MCF 10A (cell line): ENCODE measurements at regions of chr1 and their contacts with region 1.

Region 1: GRCh38 chr1:46223472-46223943 is 20.4 kb downstream of the LURAP1 start:
- DNase-seq: peak; percentile 91
- H3K4me3 Mint-ChIP-seq: no peak overlapping the region
- H3K27ac Mint-ChIP-seq: peak overlapping the region; percentile 28
- H3K4me1 Mint-ChIP-seq: peaks cover 13% of the 10 kb centered on the region
- H3K27me3 Mint-ChIP-seq: no peaks in the 10 kb centered on the region
- CTCF ChIP-seq: peak; percentile 93

Region 2: DNA sequence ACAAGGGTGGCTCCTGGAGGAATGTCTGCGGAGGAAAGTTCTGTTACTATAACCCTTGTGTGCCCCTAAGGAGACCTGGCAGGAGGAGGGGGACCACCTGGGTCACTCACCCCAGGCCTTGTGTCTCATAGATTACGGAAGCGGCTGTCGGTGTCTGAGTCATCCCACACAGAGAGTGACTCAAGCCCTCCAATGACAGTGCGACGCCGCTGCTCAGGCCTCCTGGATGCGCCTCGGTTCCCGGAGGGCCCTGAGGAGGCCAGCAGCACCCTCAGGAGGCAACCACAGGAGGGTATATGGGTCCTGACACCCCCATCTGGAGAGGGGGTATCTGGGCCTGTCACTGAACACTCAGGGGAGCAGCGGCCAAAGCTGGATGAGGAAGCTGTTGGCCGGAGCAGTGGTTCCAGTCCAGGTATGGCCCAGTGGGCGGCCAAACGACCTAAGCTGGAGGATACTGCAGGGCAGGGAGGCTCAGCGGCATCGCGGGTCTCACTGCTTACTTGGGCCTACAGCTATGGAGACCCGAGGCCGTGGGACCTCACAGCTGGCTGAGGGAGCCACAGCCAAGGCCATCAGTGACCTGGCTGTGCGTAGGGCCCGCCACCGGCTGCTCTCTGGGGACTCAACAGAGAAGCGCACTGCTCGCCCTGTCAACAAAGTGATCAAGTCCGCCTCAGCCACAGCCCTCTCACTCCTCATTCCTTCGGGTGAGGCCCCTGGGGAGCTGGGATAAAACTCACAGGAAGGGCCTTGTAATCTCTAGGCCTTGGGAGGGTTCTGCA is 192.4 kb before region 1 on chr1:
- CTCF ChIA-PET with region 1: interaction called, 48 read pairs
- POLR2A ChIA-PET with region 1: no interaction called
- intact Hi-C with region 1: no loop called
- DNase-seq: no peak
- H3K4me3 Mint-ChIP-seq: no peak overlapping the region
- H3K27ac Mint-ChIP-seq: no peak overlapping the region
- H3K4me1 Mint-ChIP-seq: no peaks in the 10 kb centered on the region
- H3K27me3 Mint-ChIP-seq: no peaks in the 10 kb centered on the region
- CTCF ChIP-seq: no peak

Region 3: DNA sequence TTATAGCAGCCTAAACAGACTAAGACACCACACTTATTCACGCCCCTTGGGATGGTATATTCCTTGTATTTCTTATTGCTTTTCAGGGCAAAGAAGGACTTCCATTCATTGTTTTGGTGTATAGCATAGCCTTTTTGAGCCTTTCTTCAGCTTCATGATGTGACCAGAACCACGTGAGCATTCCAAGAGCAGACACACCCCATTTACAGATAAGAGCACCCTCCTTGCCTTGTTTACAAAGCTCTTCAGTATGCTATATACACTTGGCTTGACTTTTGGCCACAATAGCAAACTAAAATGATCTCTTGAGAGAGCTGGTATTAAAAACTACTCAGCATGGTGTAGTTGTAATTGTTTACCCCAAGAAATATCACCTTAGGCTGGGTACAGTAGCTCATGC is 169.8 kb before region 1 on chr1:
- CTCF ChIA-PET with region 1: interaction called, 10 read pairs
- POLR2A ChIA-PET with region 1: no interaction called
- intact Hi-C with region 1: no loop called
- DNase-seq: no peak
- H3K4me3 Mint-ChIP-seq: no peak overlapping the region
- H3K27ac Mint-ChIP-seq: no peak overlapping the region
- H3K4me1 Mint-ChIP-seq: peaks cover 5% of the 10 kb centered on the region
- H3K27me3 Mint-ChIP-seq: no peaks in the 10 kb centered on the region
- CTCF ChIP-seq: no peak

Region 4: DNA sequence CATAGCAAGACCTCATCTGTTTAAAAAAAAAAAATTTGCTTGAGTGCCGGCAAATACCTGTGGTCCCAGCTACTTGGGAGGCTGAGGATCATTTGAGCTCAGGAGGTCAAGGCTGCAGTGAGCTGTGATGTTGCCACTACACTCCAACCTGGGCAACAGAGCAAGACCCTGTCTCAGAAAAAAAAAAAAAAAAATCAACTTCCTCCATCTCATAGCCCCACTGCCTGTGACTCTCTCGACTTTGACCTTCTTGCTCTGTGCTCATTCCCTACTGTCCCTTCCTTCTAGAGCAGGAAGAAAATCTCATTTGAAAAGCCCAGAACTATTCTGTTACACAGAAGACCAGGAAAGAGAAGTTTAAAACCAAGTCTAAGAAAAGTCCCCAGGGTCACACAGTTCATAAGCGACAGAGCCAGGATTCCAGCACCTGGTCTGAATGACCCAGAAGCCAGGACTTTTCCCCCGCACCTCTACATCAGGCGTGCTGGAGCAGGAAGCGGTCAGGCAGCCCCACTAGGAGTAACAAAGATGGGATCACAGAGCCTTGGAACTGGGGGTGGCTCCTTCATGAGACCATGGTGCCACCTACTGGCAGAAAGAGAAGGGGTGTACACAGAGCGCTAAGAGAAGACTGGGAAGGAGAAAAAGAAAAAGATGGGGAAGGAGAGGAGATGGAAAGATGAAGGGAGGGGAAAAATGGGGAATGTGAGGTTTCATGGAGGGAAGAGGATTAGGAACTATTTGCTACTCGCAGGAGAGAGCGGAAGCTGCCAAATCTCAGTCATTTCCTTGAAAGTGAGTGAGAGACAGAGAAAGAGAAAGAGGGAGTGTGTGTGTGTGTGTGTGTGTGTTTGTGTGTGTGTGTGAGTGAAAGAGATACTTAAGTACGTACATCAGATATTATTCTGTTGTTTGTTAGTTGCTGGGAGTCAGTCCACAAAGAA is 44.1 kb before region 1 on chr1:
- CTCF ChIA-PET with region 1: interaction called, 266 read pairs
- POLR2A ChIA-PET with region 1: interaction called, 66 read pairs
- intact Hi-C with region 1: loop called (anchors 1 kb)
- DNase-seq: peak; percentile 94
- H3K4me3 Mint-ChIP-seq: no peak overlapping the region
- H3K27ac Mint-ChIP-seq: no peak overlapping the region
- H3K4me1 Mint-ChIP-seq: peaks cover 7% of the 10 kb centered on the region
- H3K27me3 Mint-ChIP-seq: no peaks in the 10 kb centered on the region
- CTCF ChIP-seq: peak; percentile 89

Region 5: GRCh38 chr1:46197964-46198811 is 25.3 kb before region 1 on chr1 and contains the start of gene POMGNT1:
- CTCF ChIA-PET with region 1: interaction called, 26 read pairs
- POLR2A ChIA-PET with region 1: interaction called, 29 read pairs
- intact Hi-C with region 1: loop called (anchors 2 kb)
- DNase-seq: peak; percentile 73
- H3K4me3 Mint-ChIP-seq: peak within 1 kb of the TSS; percentile 76
- H3K27ac Mint-ChIP-seq: peak within 1 kb of the TSS; percentile 80
- H3K4me1 Mint-ChIP-seq: peaks cover 25% of the 10 kb centered on the region
- H3K27me3 Mint-ChIP-seq: no peaks in the 10 kb centered on the region
- CTCF ChIP-seq: peak; percentile 24
- total RNA-seq, gene POMGNT1: 85.4 and 90.7 TPM in 2 replicates

Region 6: GRCh38 chr1:46236882-46237281 is 13.4 kb after region 1 on chr1:
- CTCF ChIA-PET with region 1: interaction called, 21 read pairs
- POLR2A ChIA-PET with region 1: interaction called, 4 read pairs
- intact Hi-C with region 1: no loop called
- DNase-seq: no peak
- H3K4me3 Mint-ChIP-seq: no peak overlapping the region
- H3K27ac Mint-ChIP-seq: no peak overlapping the region
- H3K4me1 Mint-ChIP-seq: no peaks in the 10 kb centered on the region
- H3K27me3 Mint-ChIP-seq: no peaks in the 10 kb centered on the region
- CTCF ChIP-seq: no peak